ENCODE measurements at regions of chrX and their contacts with region 1.

Region 1: DNA sequence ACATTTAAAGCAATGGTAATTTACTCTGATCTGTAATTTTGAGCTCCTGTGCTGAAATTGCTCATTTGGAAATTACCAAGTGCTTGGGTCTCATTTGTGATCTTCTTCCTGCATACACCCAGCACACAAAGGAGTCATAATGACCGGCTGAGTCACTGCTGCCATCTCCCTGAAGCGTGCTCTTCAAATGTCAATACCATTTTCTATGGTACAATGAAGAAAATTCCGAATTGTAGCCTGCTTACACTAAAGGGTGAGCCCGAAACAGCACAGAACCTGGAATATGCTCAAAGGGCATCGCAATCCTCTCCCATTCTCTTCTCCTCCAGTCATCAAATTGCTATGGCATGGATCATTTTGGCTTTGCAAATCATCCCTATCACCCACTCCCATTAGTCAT is 140.5 kb downstream of the GRIA3 start:
- DNase-seq: no peak
- ATAC-seq: peak; percentile 76
- H3K4me3 ChIP-seq: no peak overlapping the region
- H3K27ac ChIP-seq: no peak overlapping the region
- H3K4me1 ChIP-seq: no peaks in the 10 kb centered on the region
- H3K27me3 ChIP-seq: no peaks in the 10 kb centered on the region
- CTCF ChIP-seq: no peak
- EP300 ChIP-seq: no peak
- POLR2A ChIP-seq: no peak
- RAD21 ChIP-seq: no peak

Region 2: GRCh38 chrX:123339221-123339905 is 14.7 kb after region 1 on chrX:
- CTCF ChIA-PET with region 1: interaction called, 24 read pairs
- POLR2A ChIA-PET with region 1: interaction called, 27 read pairs
- RAD21 ChIA-PET with region 1: interaction called, 26 read pairs
- SMC1A ChIA-PET with region 1: interaction called, 51 read pairs
- in situ Hi-C with region 1: no loop called
- intact Hi-C with region 1: no loop called
- DNase-seq: no peak
- ATAC-seq: peak; percentile 84
- H3K4me3 ChIP-seq: no peak overlapping the region
- H3K27ac ChIP-seq: no peak overlapping the region
- H3K4me1 ChIP-seq: no peaks in the 10 kb centered on the region
- H3K27me3 ChIP-seq: no peaks in the 10 kb centered on the region
- CTCF ChIP-seq: no peak
- EP300 ChIP-seq: peak in 1 of 2 experiments; percentile 53; a peak in 1 of 4 replicates
- POLR2A ChIP-seq: no peak
- RAD21 ChIP-seq: no peak

Measured in GM12878 (cell line).